ENCODE measurements at regions of chr7 and their contacts with region 1.

Region 1: DNA sequence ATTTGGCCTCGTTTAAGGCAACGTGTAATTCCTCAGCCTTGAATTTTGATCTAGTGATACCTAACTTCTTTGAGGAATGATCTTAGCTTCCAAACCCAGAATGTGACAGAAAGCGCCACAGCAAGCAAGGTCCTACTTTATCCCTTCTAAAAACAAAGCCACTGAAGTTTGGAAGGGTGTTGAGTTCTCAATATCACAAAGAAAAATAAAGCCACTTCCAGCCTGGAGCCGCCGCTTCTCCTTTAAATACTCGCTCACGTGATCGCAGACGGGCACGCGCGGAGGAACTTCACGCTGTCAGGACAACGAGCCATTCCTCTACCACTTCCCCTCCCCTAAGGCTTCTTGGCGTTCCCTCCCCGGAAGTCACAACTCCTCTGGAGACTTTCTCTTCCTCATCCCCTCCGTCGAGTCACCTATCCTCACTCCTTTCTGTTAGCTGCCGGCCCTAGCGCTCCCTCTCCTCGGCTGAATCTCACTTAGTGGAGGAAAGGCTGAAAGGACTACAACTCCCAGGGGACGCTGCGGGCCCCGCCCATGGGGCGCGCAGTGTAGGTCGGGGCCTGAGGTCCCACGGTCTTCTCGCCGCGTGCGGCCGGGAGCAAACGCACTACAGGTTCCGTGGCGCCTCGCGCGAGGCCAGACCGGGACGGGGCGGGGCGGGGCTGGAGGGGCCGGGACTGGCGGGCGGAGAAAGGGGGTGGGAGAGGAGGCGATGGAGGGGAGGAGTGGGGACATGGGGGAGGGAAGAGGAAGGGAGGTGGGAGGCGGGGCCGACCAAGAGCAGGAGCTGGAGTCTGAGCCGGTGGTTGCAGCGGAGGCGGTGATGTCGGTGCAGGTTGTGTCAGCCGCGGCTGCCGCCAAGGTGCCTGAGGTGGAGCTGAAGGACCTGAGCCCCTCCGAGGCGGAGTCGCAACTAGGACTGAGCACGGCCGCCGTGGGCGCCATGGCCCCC is at the start of gene AHCYL2:
- DNase-seq: peak; percentile 99
- ATAC-seq: peak; percentile 93
- H3K4me3 Mint-ChIP-seq: peak within 1 kb of the TSS; percentile 83
- H3K27ac Mint-ChIP-seq: peak within 1 kb of the TSS; percentile 95
- H3K4me1 Mint-ChIP-seq: peaks cover 30% of the 10 kb centered on the region
- H3K27me3 Mint-ChIP-seq: no peaks in the 10 kb centered on the region
- total RNA-seq, gene AHCYL2: 14.1 to 14.9 TPM

Region 2: DNA sequence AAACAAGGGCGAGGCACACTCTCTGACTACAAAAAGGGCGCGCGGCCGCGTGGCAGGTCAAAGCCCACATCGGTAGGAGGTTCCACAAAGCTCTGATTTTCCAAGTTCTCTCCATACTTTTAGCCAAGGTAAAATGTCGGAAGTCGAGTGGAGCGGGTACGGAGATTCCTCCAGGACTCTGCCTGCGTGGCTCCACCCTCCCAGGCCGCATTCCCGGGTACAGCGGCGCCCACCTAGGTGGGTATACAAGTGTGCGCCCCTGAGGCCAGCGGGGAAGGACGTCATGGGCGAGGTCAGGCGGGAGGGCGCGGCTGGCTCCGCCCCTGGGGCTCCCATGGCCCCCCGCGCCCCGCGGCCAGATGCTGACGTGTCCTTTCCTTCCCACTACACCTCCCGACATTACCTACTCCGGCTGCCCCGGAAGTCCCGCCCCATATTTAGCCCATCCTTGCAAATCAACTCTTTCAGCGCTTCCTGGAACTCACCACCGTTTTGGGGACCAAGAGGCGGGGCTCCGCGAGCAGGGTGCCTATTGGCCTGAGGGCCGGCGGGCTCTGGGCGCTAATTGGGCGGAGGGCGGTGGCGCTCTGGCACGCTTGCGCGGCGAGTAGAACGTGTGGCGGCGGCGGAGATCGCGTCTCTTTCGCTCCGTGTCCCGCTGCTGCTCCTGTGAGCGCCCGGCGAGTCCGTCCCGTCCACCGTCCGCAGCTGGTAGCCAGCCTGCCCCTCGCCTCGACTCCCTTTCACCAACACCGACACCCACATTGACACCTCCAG is 1572.8 kb before region 1 on chr7 and contains the start of gene SND1:
- CTCF ChIA-PET with region 1: no interaction called
- POLR2A ChIA-PET with region 1: no interaction called
- intact Hi-C with region 1: loop called in 1 of 2 experiments (anchors 5 kb)
- DNase-seq: peak; percentile 99
- ATAC-seq: peak; percentile 94
- H3K4me3 Mint-ChIP-seq: no peak within 1 kb of the TSS
- H3K27ac Mint-ChIP-seq: peak within 1 kb of the TSS; percentile 99
- H3K4me1 Mint-ChIP-seq: peaks cover 37% of the 10 kb centered on the region
- H3K27me3 Mint-ChIP-seq: no peaks in the 10 kb centered on the region
- total RNA-seq, gene SND1: 193 to 214 TPM

Region 3: DNA sequence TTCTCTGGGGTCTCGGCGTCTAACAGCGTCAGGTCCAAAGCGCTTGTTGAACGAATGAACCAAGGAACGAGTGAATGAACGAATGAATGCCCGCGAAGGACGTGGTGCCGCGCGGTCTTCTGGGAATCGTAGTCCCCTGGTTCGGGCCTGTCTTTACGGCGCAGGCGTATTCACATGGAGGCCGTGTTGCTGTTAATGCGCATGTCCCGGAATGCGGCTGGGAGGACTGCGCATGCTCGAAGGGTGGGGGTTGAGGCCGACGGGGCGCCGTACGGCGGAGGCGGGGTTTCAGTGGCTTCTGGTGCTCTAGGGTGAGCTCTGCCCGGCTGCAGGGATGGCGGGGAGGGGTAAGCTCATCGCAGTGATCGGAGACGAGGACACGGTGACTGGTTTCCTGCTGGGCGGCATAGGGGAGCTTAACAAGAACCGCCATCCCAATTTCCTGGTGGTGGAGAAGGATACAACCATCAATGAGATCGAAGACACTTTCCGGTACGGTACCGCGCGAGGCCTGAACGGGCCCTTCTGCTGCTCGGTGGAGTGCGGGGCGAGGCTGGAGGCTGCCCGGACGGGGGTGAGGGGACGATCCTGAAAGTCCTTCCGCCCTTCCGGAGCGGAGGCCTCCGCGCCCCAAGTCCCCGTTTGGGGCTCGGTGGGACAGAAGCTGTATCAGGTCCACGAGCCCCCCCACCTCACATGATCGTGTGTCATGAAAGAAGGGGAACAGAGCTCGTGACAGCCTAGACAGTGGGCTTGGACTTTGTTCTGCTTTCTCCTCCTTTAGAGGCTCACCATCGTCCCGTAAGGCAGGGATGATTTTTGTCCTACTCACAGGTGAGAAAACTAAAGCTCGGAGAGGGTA is 361.7 kb before region 1 on chr7 and contains the start of gene ATP6V1F:
- CTCF ChIA-PET with region 1: no interaction called
- POLR2A ChIA-PET with region 1: no interaction called
- intact Hi-C with region 1: loop called (anchors 1 kb)
- DNase-seq: peak; percentile 100
- ATAC-seq: peak; percentile 91
- H3K4me3 Mint-ChIP-seq: peak within 1 kb of the TSS; percentile 77
- H3K27ac Mint-ChIP-seq: peak within 1 kb of the TSS; percentile 90
- H3K4me1 Mint-ChIP-seq: peaks cover 13% of the 10 kb centered on the region
- H3K27me3 Mint-ChIP-seq: no peaks in the 10 kb centered on the region
- total RNA-seq, gene ATP6V1F: 109 to 159 TPM

Region 4: GRCh38 chr7:129271500-129272355 is 47.2 kb after region 1 on chr7:
- CTCF ChIA-PET with region 1: interaction called, 239 read pairs
- POLR2A ChIA-PET with region 1: no interaction called
- intact Hi-C with region 1: loop called (anchors 1 kb)
- DNase-seq: peak; percentile 76
- ATAC-seq: peak; percentile 97
- H3K4me3 Mint-ChIP-seq: no peak overlapping the region
- H3K27ac Mint-ChIP-seq: peak overlapping the region; percentile 53
- H3K4me1 Mint-ChIP-seq: peaks cover 6% of the 10 kb centered on the region
- H3K27me3 Mint-ChIP-seq: no peaks in the 10 kb centered on the region

Region 5: GRCh38 chr7:129468087-129468486 is 243.6 kb after region 1 on chr7:
- CTCF ChIA-PET with region 1: interaction called, 5 read pairs
- POLR2A ChIA-PET with region 1: no interaction called
- intact Hi-C with region 1: loop called in 1 of 2 experiments (anchors 2 kb)
- DNase-seq: no peak
- ATAC-seq: no peak
- H3K4me3 Mint-ChIP-seq: no peak overlapping the region
- H3K27ac Mint-ChIP-seq: no peak overlapping the region
- H3K4me1 Mint-ChIP-seq: peaks cover 16% of the 10 kb centered on the region
- H3K27me3 Mint-ChIP-seq: no peaks in the 10 kb centered on the region

Region 6: GRCh38 chr7:129780257-129780973 is 555.9 kb after region 1 on chr7:
- CTCF ChIA-PET with region 1: no interaction called
- POLR2A ChIA-PET with region 1: no interaction called
- intact Hi-C with region 1: loop called in 1 of 2 experiments (anchors 2 kb)
- DNase-seq: peak; percentile 92
- ATAC-seq: peak; percentile 82
- H3K4me3 Mint-ChIP-seq: peak overlapping the region; percentile 66
- H3K27ac Mint-ChIP-seq: no peak overlapping the region
- H3K4me1 Mint-ChIP-seq: peaks cover 33% of the 10 kb centered on the region
- H3K27me3 Mint-ChIP-seq: peaks cover 58% of the 10 kb centered on the region

Region 7: GRCh38 chr7:130050773-130051125 is 826.2 kb after region 1 on chr7:
- CTCF ChIA-PET with region 1: no interaction called
- POLR2A ChIA-PET with region 1: no interaction called
- intact Hi-C with region 1: loop called in 1 of 2 experiments (anchors 2 kb)
- DNase-seq: no peak
- ATAC-seq: no peak
- H3K4me3 Mint-ChIP-seq: peak overlapping the region; percentile 90
- H3K27ac Mint-ChIP-seq: peak overlapping the region; percentile 93
- H3K4me1 Mint-ChIP-seq: peaks cover 13% of the 10 kb centered on the region
- H3K27me3 Mint-ChIP-seq: no peaks in the 10 kb centered on the region

Measured in activated CD4-positive, alpha-beta T cell treated with anti-CD3 and anti-CD28 coated beads for 36 hours (primary cell).